Activated CD4-positive, alpha-beta T cell treated with anti-CD3 and anti-CD28 coated beads for 36 hours (primary cell): ENCODE measurements at regions of chr2 and their contacts with region 1.

Region 1: GRCh38 chr2:75064691-75065396 is 106.4 kb downstream of the POLE4 start:
- DNase-seq: peak; percentile 75
- ATAC-seq: peak; percentile 65
- H3K4me3 Mint-ChIP-seq: no peak overlapping the region
- H3K27ac Mint-ChIP-seq: no peak overlapping the region
- H3K4me1 Mint-ChIP-seq: peaks cover 3% of the 10 kb centered on the region
- H3K27me3 Mint-ChIP-seq: no peaks in the 10 kb centered on the region

Region 2: GRCh38 chr2:74690571-74690970 is 374.3 kb before region 1 on chr2:
- CTCF ChIA-PET with region 1: no interaction called
- POLR2A ChIA-PET with region 1: no interaction called
- intact Hi-C with region 1: loop called in 1 of 2 experiments (anchors 10 kb)
- DNase-seq: peak; percentile 27
- ATAC-seq: peak; percentile 77
- H3K4me3 Mint-ChIP-seq: no peak overlapping the region
- H3K27ac Mint-ChIP-seq: no peak overlapping the region
- H3K4me1 Mint-ChIP-seq: no peaks in the 10 kb centered on the region
- H3K27me3 Mint-ChIP-seq: no peaks in the 10 kb centered on the region

Region 3: GRCh38 chr2:74919827-74920226 is 145.0 kb before region 1 on chr2:
- CTCF ChIA-PET with region 1: interaction called, 6 read pairs
- POLR2A ChIA-PET with region 1: no interaction called
- intact Hi-C with region 1: loop called in 1 of 2 experiments (anchors 1 kb)
- DNase-seq: peak; percentile 84
- ATAC-seq: peak; percentile 72
- H3K4me3 Mint-ChIP-seq: no peak overlapping the region
- H3K27ac Mint-ChIP-seq: no peak overlapping the region
- H3K4me1 Mint-ChIP-seq: peaks cover 5% of the 10 kb centered on the region
- H3K27me3 Mint-ChIP-seq: peaks cover 5% of the 10 kb centered on the region

Region 4: GRCh38 chr2:75076088-75076487 is 11.2 kb after region 1 on chr2:
- CTCF ChIA-PET with region 1: interaction called, 21 read pairs
- POLR2A ChIA-PET with region 1: no interaction called
- intact Hi-C with region 1: no loop called
- DNase-seq: no peak
- ATAC-seq: no peak
- H3K4me3 Mint-ChIP-seq: no peak overlapping the region
- H3K27ac Mint-ChIP-seq: no peak overlapping the region
- H3K4me1 Mint-ChIP-seq: no peaks in the 10 kb centered on the region
- H3K27me3 Mint-ChIP-seq: no peaks in the 10 kb centered on the region

Region 5: DNA sequence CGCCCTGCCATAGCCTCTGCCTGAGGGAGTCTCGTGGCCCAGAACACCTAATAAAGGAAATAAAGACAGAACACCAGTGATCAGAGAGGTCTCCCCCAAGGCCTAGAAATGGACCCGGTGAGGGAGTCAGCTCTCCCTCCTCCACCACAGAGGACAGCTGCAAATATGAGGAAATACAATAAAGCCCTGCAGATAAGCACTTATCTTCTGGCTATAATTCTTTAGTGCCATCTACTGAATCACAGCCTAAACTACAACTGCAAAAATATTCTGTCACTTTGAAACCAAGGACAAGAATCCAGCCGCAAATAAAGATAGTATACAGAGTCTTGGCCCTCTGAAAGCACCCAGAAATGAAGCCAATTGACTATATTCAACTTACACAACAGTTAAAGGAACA is 176.9 kb after region 1 on chr2:
- CTCF ChIA-PET with region 1: interaction called, 5 read pairs
- POLR2A ChIA-PET with region 1: no interaction called
- intact Hi-C with region 1: loop called (anchors 5 to 10 kb)
- DNase-seq: no peak
- ATAC-seq: no peak
- H3K4me3 Mint-ChIP-seq: no peak overlapping the region
- H3K27ac Mint-ChIP-seq: no peak overlapping the region
- H3K4me1 Mint-ChIP-seq: no peaks in the 10 kb centered on the region
- H3K27me3 Mint-ChIP-seq: peaks cover 5% of the 10 kb centered on the region

Region 6: GRCh38 chr2:75403991-75404428 is 339.2 kb after region 1 on chr2:
- CTCF ChIA-PET with region 1: interaction called, 7 read pairs
- POLR2A ChIA-PET with region 1: no interaction called
- intact Hi-C with region 1: loop called (anchors 1 to 5 kb)
- DNase-seq: no peak
- ATAC-seq: peak; percentile 63
- H3K4me3 Mint-ChIP-seq: no peak overlapping the region
- H3K27ac Mint-ChIP-seq: no peak overlapping the region
- H3K4me1 Mint-ChIP-seq: no peaks in the 10 kb centered on the region
- H3K27me3 Mint-ChIP-seq: peaks cover 8% of the 10 kb centered on the region

Region 7: DNA sequence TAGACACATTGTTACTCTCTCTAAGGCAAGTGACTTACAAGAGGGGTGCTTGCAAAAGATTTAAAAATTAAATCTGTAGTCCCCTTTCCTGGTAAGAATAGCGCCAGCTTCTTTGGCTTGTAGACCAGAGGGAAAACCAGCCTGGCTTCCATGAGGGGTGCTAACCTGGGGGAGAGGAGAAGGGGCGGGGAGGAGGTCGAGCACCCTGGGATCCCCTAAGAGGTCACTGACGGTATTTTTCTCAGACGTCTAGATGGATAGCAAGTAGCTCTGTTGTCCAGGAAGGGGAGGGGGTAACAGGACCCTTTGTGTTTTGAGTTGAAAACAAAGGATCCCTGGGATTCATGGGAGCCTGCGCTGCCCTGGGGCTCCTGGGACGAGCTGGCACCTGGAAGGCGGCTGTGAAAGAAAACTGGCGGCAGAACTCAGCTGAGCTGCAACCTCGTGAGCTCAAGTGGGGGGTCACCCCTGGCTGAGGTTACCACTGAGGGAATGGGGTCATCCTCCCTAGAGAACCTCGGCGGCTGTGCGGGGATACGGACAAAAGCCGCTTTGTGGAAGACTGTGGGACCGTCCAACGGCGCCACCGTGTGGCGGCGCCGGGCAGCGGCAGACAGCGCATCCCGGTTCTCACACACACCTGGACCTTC is 544.0 kb after region 1 on chr2:
- CTCF ChIA-PET with region 1: interaction called, 4 read pairs
- POLR2A ChIA-PET with region 1: no interaction called
- intact Hi-C with region 1: loop called (anchors 1 to 10 kb)
- DNase-seq: peak; percentile 72
- ATAC-seq: peak; percentile 81
- H3K4me3 Mint-ChIP-seq: no peak overlapping the region
- H3K27ac Mint-ChIP-seq: no peak overlapping the region
- H3K4me1 Mint-ChIP-seq: peaks cover 6% of the 10 kb centered on the region
- H3K27me3 Mint-ChIP-seq: peaks cover 55% of the 10 kb centered on the region

Region 8: GRCh38 chr2:75986617-75987016 is 921.8 kb after region 1 on chr2:
- CTCF ChIA-PET with region 1: no interaction called
- POLR2A ChIA-PET with region 1: no interaction called
- intact Hi-C with region 1: no loop called
- DNase-seq: no peak
- ATAC-seq: no peak
- H3K4me3 Mint-ChIP-seq: no peak overlapping the region
- H3K27ac Mint-ChIP-seq: no peak overlapping the region
- H3K4me1 Mint-ChIP-seq: no peaks in the 10 kb centered on the region
- H3K27me3 Mint-ChIP-seq: no peaks in the 10 kb centered on the region